K562 (cell line): ENCODE measurements at regions of chr6 and their contacts with region 1.

Region 1: DNA sequence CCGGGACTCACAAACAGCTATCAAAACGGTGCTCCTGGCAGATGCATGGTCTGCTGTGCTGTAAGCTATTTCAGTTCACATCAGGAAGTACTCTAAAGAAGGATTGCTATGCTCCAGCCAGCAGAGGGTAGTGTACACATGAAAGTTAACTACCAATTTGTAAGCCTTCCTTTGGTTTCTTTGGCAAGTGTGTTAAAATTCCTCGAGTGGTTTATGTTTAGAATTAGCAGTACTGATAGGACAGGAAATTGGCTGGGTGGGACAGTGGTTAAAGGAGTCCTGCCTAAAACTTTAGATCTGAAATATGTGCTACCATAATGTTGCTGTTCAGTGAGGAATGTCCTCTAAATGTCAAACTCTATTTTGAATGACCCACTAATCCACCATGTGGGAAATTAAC is 47.4 kb downstream of the TRMT11 start:
- DNase-seq: peak; percentile 28 to 76 (median 51)
- ATAC-seq: peak; percentile 99
- H3K4me3 ChIP-seq: no peak overlapping the region
- H3K27ac ChIP-seq: peak overlapping the region; percentile 18; the same call in 1 of the 3 replicates
- H3K4me1 ChIP-seq: peaks cover 0 to 8% of the 10 kb centered on the region in 2 experiments; a peak in 2 of 5 replicates
- H3K27me3 ChIP-seq: no peaks in the 10 kb centered on the region
- CTCF ChIP-seq: peak; percentile 60 to 81 (median 75)
- EP300 ChIP-seq: no peak
- POLR2A ChIP-seq: no peak
- RAD21 ChIP-seq: peak; percentile 95

Region 2: DNA sequence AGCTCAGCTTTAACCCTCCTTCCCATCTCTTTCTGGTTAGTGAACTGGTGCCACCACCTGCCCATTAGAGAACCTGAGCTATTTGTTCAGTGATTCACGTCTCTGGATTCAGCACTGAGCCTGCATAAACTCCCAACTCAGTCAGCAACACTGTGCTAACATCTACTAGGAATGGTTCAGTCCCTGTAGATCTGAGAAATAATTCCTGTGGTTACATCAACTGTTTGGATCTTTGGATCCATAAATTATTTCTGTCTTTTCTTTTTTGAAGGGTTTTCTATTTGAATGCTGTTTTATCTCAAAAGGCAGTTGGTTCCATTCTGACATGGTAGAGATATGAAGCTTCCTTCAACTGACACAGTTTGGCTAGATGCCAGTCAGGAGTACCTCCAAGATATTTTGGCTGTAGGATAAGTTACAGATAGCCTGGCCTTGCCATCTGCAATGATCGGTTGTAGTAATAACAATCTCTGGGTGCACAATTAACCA is 78.5 kb after region 1 on chr6:
- CTCF ChIA-PET with region 1: no interaction called
- POLR2A ChIA-PET with region 1: no interaction called
- in situ Hi-C with region 1: no loop called
- intact Hi-C with region 1: loop called (anchors 2 kb)
- DNase-seq: peak in 2 of 4 experiments; percentile 57 to 92
- ATAC-seq: peak; percentile 80
- H3K4me3 ChIP-seq: no peak overlapping the region
- H3K27ac ChIP-seq: peak overlapping the region; percentile 73
- H3K4me1 ChIP-seq: peaks cover 0 to 48% of the 10 kb centered on the region in 2 experiments; a peak in 4 of 5 replicates
- H3K27me3 ChIP-seq: no peaks in the 10 kb centered on the region
- CTCF ChIP-seq: peak in 2 of 3 experiments; percentile 2 to 29; a peak in 2 of 6 replicates
- EP300 ChIP-seq: peak; percentile 99
- POLR2A ChIP-seq: no peak
- RAD21 ChIP-seq: peak; percentile 25 to 44; a peak in 3 of 4 replicates

Region 3: GRCh38 chr6:126339796-126340609 is 306.3 kb after region 1 on chr6 and contains the start of gene CENPW:
- CTCF ChIA-PET with region 1: no interaction called
- POLR2A ChIA-PET with region 1: no interaction called
- in situ Hi-C with region 1: loop called (anchors 25 kb)
- intact Hi-C with region 1: no loop called
- DNase-seq: peak; percentile 95 to 97 (median 97)
- ATAC-seq: peak; percentile 87
- H3K4me3 ChIP-seq: peak within 1 kb of the TSS; percentile 87
- H3K27ac ChIP-seq: peak within 1 kb of the TSS; percentile 89
- H3K4me1 ChIP-seq: peaks cover 0 to 8% of the 10 kb centered on the region in 2 experiments; a peak in 2 of 5 replicates
- H3K27me3 ChIP-seq: no peaks in the 10 kb centered on the region
- CTCF ChIP-seq: no peak
- EP300 ChIP-seq: peak; percentile 49; the same call in 1 of the 2 replicates
- POLR2A ChIP-seq: peak; percentile 85
- RAD21 ChIP-seq: no peak
- polyA plus RNA-seq, gene CENPW: 240 to 285 TPM